T-cell (primary cell): ENCODE measurements at regions of chr9 and their contacts with region 1.

Region 1: GRCh38 chr9:131719262-131719908 is 20.5 kb downstream of the RAPGEF1 start:
- DNase-seq: no peak
- ATAC-seq: peak in 1 of 4 experiments; percentile 8
- H3K4me3 ChIP-seq: no peak overlapping the region
- H3K4me3 Mint-ChIP-seq: no peak overlapping the region
- H3K27ac ChIP-seq: peak overlapping the region; percentile 18
- H3K27ac Mint-ChIP-seq: peak overlapping the region; percentile 34 to 43
- H3K4me1 ChIP-seq: peaks cover 0 to 66% of the 10 kb centered on the region in 2 experiments
- H3K4me1 Mint-ChIP-seq: peaks cover 62 to 84% (median 78%) of the 10 kb centered on the region in 3 donors
- H3K27me3 ChIP-seq: no peaks in the 10 kb centered on the region
- H3K27me3 Mint-ChIP-seq: no peaks in the 10 kb centered on the region

Region 2: DNA sequence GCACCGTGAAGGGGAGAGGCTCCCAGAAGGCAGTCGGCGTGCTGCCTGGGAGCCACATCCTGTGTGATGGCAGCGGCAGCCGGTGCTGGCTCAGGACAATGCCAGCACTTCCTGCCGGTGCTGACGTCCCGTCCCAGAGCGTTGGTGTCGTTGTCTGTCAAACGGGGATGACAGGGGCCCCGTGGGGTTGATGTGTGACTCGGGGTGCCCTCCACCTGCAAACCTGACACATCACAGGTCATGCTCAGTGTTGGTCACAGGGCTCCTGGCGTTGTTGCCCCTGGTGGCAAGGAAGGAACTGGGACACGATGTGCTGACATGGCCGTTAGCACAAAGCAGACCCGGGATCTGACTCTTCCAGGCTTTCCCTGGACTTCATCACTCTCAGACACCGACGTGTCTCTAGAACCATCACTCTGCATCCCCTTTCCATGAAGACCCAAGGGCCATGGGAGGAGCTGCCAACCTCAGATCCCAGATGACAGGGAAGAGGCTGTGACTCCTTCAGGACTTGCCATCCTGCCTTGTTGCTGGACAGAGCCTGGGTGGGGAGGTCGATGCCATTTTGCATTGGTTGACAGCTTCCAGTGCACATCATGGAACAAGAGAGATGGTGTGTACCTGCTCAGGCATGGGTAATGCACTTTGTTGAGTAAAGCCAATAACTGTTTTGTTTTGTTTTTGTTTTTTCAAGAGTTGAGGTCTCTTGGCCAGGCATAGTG is 408.4 kb before region 1 on chr9:
- CTCF ChIA-PET with region 1: no interaction called
- POLR2A ChIA-PET with region 1: interaction called in 1 of 2 experiments, 10 read pairs
- DNase-seq: peak; percentile 44 to 84 (median 73)
- ATAC-seq: peak; percentile 92 to 99 (median 97)
- H3K4me3 ChIP-seq: peak overlapping the region; percentile 11 to 31
- H3K4me3 Mint-ChIP-seq: peak overlapping the region; percentile 36 to 68 (median 49)
- H3K27ac ChIP-seq: peak overlapping the region; percentile 40
- H3K27ac Mint-ChIP-seq: peak overlapping the region; percentile 67 to 68
- H3K4me1 ChIP-seq: peaks cover 7 to 18% of the 10 kb centered on the region in 2 experiments
- H3K4me1 Mint-ChIP-seq: peaks cover 10 to 12% (median 11%) of the 10 kb centered on the region in 3 donors
- H3K27me3 ChIP-seq: peaks cover 0 to 12% of the 10 kb centered on the region in 2 experiments
- H3K27me3 Mint-ChIP-seq: no peaks in the 10 kb centered on the region

Region 3: GRCh38 chr9:131668439-131669268 is 50.7 kb before region 1 on chr9:
- CTCF ChIA-PET with region 1: interaction called in 1 of 2 experiments, 11 read pairs
- POLR2A ChIA-PET with region 1: no interaction called
- DNase-seq: peak; percentile 39 to 81 (median 65)
- ATAC-seq: peak; percentile 73 to 85 (median 83)
- H3K4me3 ChIP-seq: peak overlapping the region; percentile 19 to 25
- H3K4me3 Mint-ChIP-seq: peak overlapping the region; percentile 63 to 81 (median 80)
- H3K27ac ChIP-seq: peak overlapping the region; percentile 98
- H3K27ac Mint-ChIP-seq: peak overlapping the region; percentile 96
- H3K4me1 ChIP-seq: peaks cover 34 to 89% of the 10 kb centered on the region in 2 experiments
- H3K4me1 Mint-ChIP-seq: peaks cover 79 to 96% (median 96%) of the 10 kb centered on the region in 3 donors
- H3K27me3 ChIP-seq: no peaks in the 10 kb centered on the region
- H3K27me3 Mint-ChIP-seq: no peaks in the 10 kb centered on the region